Posterior vena cava (tissue), 2 donors: ENCODE measurements at regions of chr10 and their contacts with region 1.

Region 1: GRCh38 chr10:61750929-61751471 is 88.3 kb downstream of the CABCOCO1 start:
- DNase-seq: peak; percentile 82

Region 2: DNA sequence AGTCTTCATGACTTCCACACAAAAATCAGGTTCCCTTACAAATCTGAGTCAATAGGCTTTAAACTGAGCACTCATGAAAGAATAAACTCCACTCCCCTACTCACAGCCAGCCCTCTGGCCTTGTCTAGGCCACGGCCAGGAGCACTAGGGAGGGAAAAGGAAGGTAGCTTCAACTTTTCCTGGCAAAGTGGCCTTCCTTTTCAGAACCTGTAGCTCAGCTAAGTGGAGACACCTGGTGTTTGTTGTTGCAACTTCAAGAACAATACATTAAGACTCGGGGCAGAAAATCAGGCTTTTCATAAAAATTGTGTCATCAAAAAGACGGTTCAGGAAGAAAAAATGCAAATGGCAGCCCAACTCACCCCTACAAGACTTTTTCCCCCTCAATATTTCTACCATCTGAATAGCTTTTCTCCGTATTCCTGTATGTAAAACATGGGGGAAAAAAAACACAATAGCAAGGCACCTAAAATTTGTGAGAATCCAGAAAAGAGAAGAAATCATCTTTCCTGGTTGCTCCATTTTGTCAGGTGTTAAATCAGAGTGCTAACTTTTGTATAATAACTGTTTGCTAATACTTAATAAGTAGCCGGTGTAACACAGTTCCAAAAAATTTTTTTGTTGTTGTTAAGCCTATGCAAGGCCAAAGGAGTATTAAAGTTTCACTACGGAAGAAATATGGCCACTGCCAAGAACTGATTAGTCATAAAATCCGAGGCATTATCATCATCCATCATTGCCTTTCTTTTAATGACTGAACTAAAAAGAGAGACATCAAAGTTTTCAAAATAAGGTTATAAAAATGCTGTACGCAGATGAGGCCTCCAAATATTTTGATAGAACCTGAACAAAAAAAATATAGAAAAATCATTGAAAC is 84.3 kb after region 1 on chr10:
- intact Hi-C with region 1: loop called in 1 of 2 experiments (anchors 10 kb)
- DNase-seq: no peak